Naive thymus-derived CD4-positive, alpha-beta T cell (primary cell): ENCODE measurements at regions of chr6 and their contacts with region 1.

Region 1: GRCh38 chr6:125301435-125302391 is at the start of gene HDDC2:
- DNase-seq: peak; percentile 23 to 66 (median 33)
- ATAC-seq: peak; percentile 66
- H3K4me3 ChIP-seq: peak within 1 kb of the TSS; percentile 61
- H3K4me3 Mint-ChIP-seq: peak within 1 kb of the TSS; percentile 83 to 95 (median 92)
- H3K27ac ChIP-seq: peak within 1 kb of the TSS; percentile 76
- H3K27ac Mint-ChIP-seq: peak within 1 kb of the TSS; percentile 64 to 95 (median 92)
- H3K4me1 ChIP-seq: peaks cover 25 to 34% of the 10 kb centered on the region in 2 donors
- H3K4me1 Mint-ChIP-seq: peaks cover 43 to 65% (median 63%) of the 10 kb centered on the region in 7 donors
- H3K27me3 ChIP-seq: no peaks in the 10 kb centered on the region
- H3K27me3 Mint-ChIP-seq: peaks cover 0 to 29% (median 0%) of the 10 kb centered on the region in 5 donors
- total RNA-seq, gene HDDC2: 33.4 to 58.5 (median 54.8) TPM

Region 2: DNA sequence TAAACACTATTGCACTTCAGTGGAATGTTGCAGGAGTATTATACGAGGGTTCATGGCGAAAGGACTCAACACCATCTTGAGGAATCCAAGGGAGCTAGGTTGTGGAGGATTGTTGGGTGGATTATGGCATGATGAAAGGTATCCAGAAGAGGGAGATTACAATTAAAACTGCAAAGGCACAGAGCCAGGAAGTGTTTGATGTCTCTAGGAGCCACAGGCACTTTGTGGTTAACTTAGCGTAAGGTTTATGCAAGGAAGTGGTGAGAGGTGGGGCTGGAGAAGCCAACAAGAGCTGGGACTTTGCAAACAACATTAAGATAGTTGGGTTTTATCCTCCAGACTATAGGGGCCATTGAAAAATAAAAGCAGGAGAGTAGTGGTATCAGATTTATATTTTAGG is 234.7 kb before region 1 on chr6:
- CTCF ChIA-PET with region 1: no interaction called
- POLR2A ChIA-PET with region 1: interaction called, 6 read pairs
- intact Hi-C with region 1: loop called in 1 of 2 experiments (anchors 5 kb)
- DNase-seq: peak in 8 of 9 donors; percentile 13 to 77 (median 58)
- ATAC-seq: peak; percentile 89
- H3K4me3 ChIP-seq: no peak overlapping the region
- H3K4me3 Mint-ChIP-seq: no peak overlapping the region
- H3K27ac ChIP-seq: no peak overlapping the region
- H3K27ac Mint-ChIP-seq: no peak overlapping the region
- H3K4me1 ChIP-seq: peaks cover 0 to 36% of the 10 kb centered on the region in 2 donors
- H3K4me1 Mint-ChIP-seq: peaks cover 0 to 6% (median 0%) of the 10 kb centered on the region in 7 donors
- H3K27me3 ChIP-seq: no peaks in the 10 kb centered on the region
- H3K27me3 Mint-ChIP-seq: peaks cover 0 to 10% (median 0%) of the 10 kb centered on the region in 5 donors

Region 3: GRCh38 chr6:125314019-125314581 is 12.4 kb after region 1 on chr6:
- CTCF ChIA-PET with region 1: interaction called, 5 read pairs
- POLR2A ChIA-PET with region 1: interaction called, 4 read pairs
- intact Hi-C with region 1: loop called in 1 of 2 experiments (anchors 1 kb)
- DNase-seq: peak in 3 of 9 donors; percentile 17 to 27 (median 22)
- ATAC-seq: peak; percentile 76
- H3K4me3 ChIP-seq: no peak overlapping the region
- H3K4me3 Mint-ChIP-seq: no peak overlapping the region
- H3K27ac ChIP-seq: no peak overlapping the region
- H3K27ac Mint-ChIP-seq: no peak overlapping the region
- H3K4me1 ChIP-seq: no peaks in the 10 kb centered on the region
- H3K4me1 Mint-ChIP-seq: peaks cover 0 to 2% (median 0%) of the 10 kb centered on the region in 7 donors
- H3K27me3 ChIP-seq: peaks cover 0 to 6% of the 10 kb centered on the region in 2 donors
- H3K27me3 Mint-ChIP-seq: peaks cover 0 to 22% (median 4%) of the 10 kb centered on the region in 5 donors

Region 4: GRCh38 chr6:125918681-125919566 is 617.2 kb after region 1 on chr6:
- CTCF ChIA-PET with region 1: no interaction called
- POLR2A ChIA-PET with region 1: no interaction called
- intact Hi-C with region 1: loop called in 1 of 2 experiments (anchors 5 kb)
- DNase-seq: peak in 7 of 9 donors; percentile 4 to 68 (median 40)
- ATAC-seq: peak; percentile 95
- H3K4me3 ChIP-seq: peak overlapping the region; percentile 34
- H3K4me3 Mint-ChIP-seq: peak overlapping the region in 9 of 10 donors; percentile 27 to 98 (median 70)
- H3K27ac ChIP-seq: peak overlapping the region; percentile 68
- H3K27ac Mint-ChIP-seq: peak overlapping the region; percentile 80 to 95 (median 87)
- H3K4me1 ChIP-seq: peaks cover 10 to 11% of the 10 kb centered on the region in 2 donors
- H3K4me1 Mint-ChIP-seq: peaks cover 15 to 60% (median 21%) of the 10 kb centered on the region in 7 donors
- H3K27me3 ChIP-seq: no peaks in the 10 kb centered on the region
- H3K27me3 Mint-ChIP-seq: no peaks in the 10 kb centered on the region

Region 5: DNA sequence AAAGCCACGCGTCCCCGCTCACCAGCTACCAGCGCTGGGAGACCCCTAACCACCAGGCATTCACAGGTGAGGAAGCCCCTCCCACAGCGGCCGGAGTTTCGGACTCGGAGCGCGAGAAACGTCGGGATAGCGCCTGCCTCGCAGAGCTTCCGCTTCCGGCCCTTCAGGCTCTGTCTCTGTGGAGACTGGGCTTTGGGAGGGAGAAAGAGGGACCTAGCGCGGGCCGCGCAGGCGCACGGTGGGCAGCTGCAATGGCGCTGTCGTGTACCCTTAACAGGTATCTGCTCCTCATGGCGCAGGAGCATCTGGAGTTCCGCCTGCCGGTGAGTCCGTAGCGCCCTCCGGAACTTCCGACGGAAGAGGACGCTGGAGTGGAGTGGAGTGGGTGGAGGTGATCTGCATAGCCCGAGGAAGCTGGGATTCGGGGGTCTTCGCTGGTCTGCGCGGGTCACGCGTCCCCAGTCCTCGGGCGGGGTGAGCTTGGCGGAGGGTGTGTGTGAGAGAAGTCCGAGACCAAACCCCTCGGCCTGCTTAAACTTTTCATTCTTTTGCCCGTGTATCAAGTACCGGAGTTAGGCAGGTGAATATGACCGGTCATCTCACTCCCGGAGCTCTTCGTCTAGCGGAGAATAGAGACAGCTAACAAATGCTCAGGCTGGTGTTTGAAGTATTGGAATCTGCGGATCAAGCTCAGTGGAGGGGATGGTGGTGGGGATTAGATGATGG is 684.8 kb after region 1 on chr6 and contains the start of gene TRMT11:
- CTCF ChIA-PET with region 1: no interaction called
- POLR2A ChIA-PET with region 1: interaction called, 3 read pairs
- intact Hi-C with region 1: loop called (anchors 1 to 5 kb)
- DNase-seq: peak; percentile 58 to 80 (median 77)
- ATAC-seq: peak; percentile 95
- H3K4me3 ChIP-seq: peak within 1 kb of the TSS; percentile 89
- H3K4me3 Mint-ChIP-seq: peak within 1 kb of the TSS in 4 of 10 donors; percentile 12 to 40 (median 24)
- H3K27ac ChIP-seq: peak within 1 kb of the TSS; percentile 76
- H3K27ac Mint-ChIP-seq: no peak within 1 kb of the TSS
- H3K4me1 ChIP-seq: peaks cover 14 to 21% of the 10 kb centered on the region in 2 donors
- H3K4me1 Mint-ChIP-seq: peaks cover 0 to 19% (median 2%) of the 10 kb centered on the region in 7 donors
- H3K27me3 ChIP-seq: no peaks in the 10 kb centered on the region
- H3K27me3 Mint-ChIP-seq: no peaks in the 10 kb centered on the region
- total RNA-seq, gene TRMT11: 13.6 to 34.1 (median 20.1) TPM